ENCODE measurements at regions of chr1 and their contacts with region 1.

Region 1: DNA sequence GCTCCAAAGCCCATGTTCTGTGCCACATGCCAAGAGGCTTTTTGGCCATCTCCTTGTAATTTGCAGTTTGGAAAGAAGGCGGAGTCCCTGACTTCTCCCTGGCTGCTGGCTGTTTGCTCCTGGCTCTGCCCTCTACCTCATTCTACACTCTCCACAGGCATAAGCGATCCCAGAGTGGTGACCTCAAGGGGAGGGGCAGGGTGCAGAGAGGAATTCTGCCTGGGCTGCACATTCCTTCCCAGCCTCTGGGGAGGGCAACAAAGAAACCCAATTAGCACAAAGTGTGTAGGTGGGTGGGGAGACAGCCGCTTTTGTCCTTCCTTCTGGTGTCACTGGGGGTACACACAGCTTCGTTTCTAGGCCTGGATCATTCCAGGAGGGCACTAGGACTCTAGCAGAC is 95.3 kb downstream of the HIVEP3 start:
- H3K4me3 ChIP-seq: no peak overlapping the region
- H3K27ac ChIP-seq: no peak overlapping the region
- H3K4me1 ChIP-seq: 0 out of 2 replicates have a peak, but pooled peaks cover 4% of the 10 kb centered on the region
- CTCF ChIP-seq: no peak

Region 2: GRCh38 chr1:41812051-41812450 is 11.4 kb before region 1 on chr1:
- CTCF ChIA-PET with region 1: interaction called, 27 read pairs
- POLR2A ChIA-PET with region 1: no interaction called
- H3K4me3 ChIP-seq: no peak overlapping the region
- H3K27ac ChIP-seq: no peak overlapping the region
- H3K4me1 ChIP-seq: no peaks in the 10 kb centered on the region
- CTCF ChIP-seq: 0 out of 2 replicates have a peak, but pooled peaks have one; percentile 11

Measured in HEK293 (cell line).